ENCODE measurements at regions of chr17 and their contacts with region 1.

Region 1: DNA sequence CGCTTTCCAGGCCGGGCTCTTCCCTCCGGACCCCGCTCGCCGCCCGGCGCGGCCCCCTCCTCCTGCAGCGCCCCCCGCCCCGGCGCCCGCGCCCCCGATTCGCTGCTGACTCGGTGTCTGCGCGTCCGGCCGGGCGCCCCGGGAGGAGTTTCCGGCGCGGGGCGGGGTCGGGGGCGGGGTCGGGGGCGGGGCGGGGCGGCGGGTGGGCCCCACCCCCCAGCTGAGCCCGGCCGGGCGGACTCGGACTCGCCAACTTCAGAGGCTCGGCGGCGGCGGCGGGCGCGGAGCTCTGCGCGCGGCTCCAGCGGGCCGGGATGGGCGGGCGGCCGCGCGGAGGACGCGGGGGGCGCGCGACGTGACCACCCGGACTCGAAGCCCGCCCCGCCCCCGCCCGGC is at the start of gene METRNL:
- DNase-seq: peak; percentile 92
- total RNA-seq, gene METRNL: 104 TPM

Region 2: GRCh38 chr17:83037084-83037873 is 42.1 kb before region 1 on chr17:
- intact Hi-C with region 1: no loop called
- DNase-seq: no peak

Region 3: DNA sequence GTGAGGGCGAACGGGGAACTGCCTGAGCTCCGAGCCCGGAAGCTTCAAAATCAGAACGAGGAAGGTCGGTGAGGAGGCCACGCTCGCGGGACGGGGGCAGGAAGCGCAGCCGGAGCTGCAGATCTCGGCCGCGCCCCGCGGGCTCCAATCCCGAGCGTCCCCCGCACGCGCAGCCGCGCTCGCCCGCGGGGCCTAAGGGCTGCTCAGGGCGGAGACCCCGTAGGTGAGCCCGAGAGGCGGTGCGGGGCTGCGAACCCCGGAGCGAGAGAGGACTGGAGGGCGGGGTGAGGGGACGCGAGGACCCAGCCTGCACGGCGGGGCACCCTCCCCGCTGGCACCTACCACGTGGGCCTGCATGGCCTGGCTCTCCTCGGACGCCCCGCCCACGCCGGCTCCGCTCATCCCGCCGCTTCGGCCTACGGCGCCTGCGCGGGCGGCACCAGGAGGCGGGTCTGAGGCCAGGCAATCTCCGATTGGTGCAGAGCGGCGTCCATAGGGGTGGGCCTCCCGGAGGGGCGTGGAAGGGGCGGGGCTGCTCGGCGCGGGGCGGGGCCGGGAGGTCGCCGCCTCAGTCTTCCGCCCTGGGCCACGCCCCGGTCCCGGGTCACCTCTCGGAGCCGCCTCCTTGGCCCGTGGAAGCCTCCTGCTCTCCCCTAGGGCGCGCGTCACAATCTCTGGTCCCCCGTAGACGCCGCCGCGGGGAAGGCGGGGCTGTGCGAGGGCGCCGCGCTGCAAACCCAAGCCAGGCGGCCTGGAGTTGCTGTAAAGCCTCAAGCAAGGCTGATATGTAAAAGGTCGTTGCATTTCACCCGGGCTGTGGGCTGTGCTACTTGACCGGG is 27.7 kb before region 1 on chr17:
- intact Hi-C with region 1: loop called (anchors 2 kb)
- DNase-seq: peak; percentile 98